ENCODE measurements at regions of chr12 and their contacts with region 1.

Region 1: GRCh38 chr12:23204933-23205778 is 580.2 kb downstream of the ETNK1 start:
- DNase-seq: peak; percentile 71
- ATAC-seq: peak; percentile 89
- H3K4me3 ChIP-seq: no peak overlapping the region
- H3K4me3 Mint-ChIP-seq: no peak overlapping the region
- H3K27ac ChIP-seq: no peak overlapping the region
- H3K27ac Mint-ChIP-seq: no peak overlapping the region
- H3K4me1 ChIP-seq: no peaks in the 10 kb centered on the region
- H3K4me1 Mint-ChIP-seq: no peaks in the 10 kb centered on the region
- H3K27me3 ChIP-seq: no peaks in the 10 kb centered on the region
- H3K27me3 Mint-ChIP-seq: peaks cover 22% of the 10 kb centered on the region
- CTCF ChIP-seq: peak; percentile 96

Region 2: GRCh38 chr12:22684140-22685118 is 520.7 kb before region 1 on chr12:
- CTCF ChIA-PET with region 1: no interaction called
- POLR2A ChIA-PET with region 1: no interaction called
- intact Hi-C with region 1: loop called (anchors 5 kb)
- DNase-seq: peak; percentile 48
- ATAC-seq: no peak
- H3K4me3 ChIP-seq: no peak overlapping the region
- H3K4me3 Mint-ChIP-seq: no peak overlapping the region
- H3K27ac ChIP-seq: no peak overlapping the region
- H3K27ac Mint-ChIP-seq: no peak overlapping the region
- H3K4me1 ChIP-seq: peaks cover 11 to 14% of the 10 kb centered on the region in 2 donors
- H3K4me1 Mint-ChIP-seq: peaks cover 25% of the 10 kb centered on the region
- H3K27me3 ChIP-seq: no peaks in the 10 kb centered on the region
- H3K27me3 Mint-ChIP-seq: no peaks in the 10 kb centered on the region
- CTCF ChIP-seq: peak; percentile 83

Region 3: GRCh38 chr12:23169012-23169695 is 36.0 kb before region 1 on chr12:
- CTCF ChIA-PET with region 1: no interaction called
- POLR2A ChIA-PET with region 1: no interaction called
- intact Hi-C with region 1: no loop called
- DNase-seq: no peak
- ATAC-seq: no peak
- H3K4me3 ChIP-seq: no peak overlapping the region
- H3K4me3 Mint-ChIP-seq: no peak overlapping the region
- H3K27ac ChIP-seq: no peak overlapping the region
- H3K27ac Mint-ChIP-seq: no peak overlapping the region
- H3K4me1 ChIP-seq: no peaks in the 10 kb centered on the region
- H3K4me1 Mint-ChIP-seq: no peaks in the 10 kb centered on the region
- H3K27me3 ChIP-seq: no peaks in the 10 kb centered on the region
- H3K27me3 Mint-ChIP-seq: peaks cover 8% of the 10 kb centered on the region
- CTCF ChIP-seq: no peak

Measured in B cell (primary cell).